ENCODE measurements at regions of chr1 and their contacts with region 1.

Region 1: GRCh38 chr1:21937372-21938221 is 487 bp upstream of the HSPG2 start:
- DNase-seq: peak; percentile 59 to 76
- ATAC-seq: peak; percentile 45 to 61
- H3K4me3 ChIP-seq: peak overlapping the region; percentile 55 to 70 (median 60)
- H3K27ac ChIP-seq: peak overlapping the region; percentile 72 to 83 (median 80)
- H3K4me1 ChIP-seq: peaks cover 48 to 75% of the 10 kb centered on the region in 2 donors
- H3K27me3 ChIP-seq: no peaks in the 10 kb centered on the region
- CTCF ChIP-seq: no peak
- POLR2A ChIP-seq: peak in 1 of 2 donors; percentile 37

Region 2: GRCh38 chr1:20194757-20195461 is 1742.7 kb before region 1 on chr1:
- in situ Hi-C with region 1: no loop called
- intact Hi-C with region 1: no loop called
- DNase-seq: peak; percentile 45 to 54
- ATAC-seq: peak; percentile 68 to 91
- H3K4me3 ChIP-seq: peak overlapping the region in 2 of 4 donors; percentile 14 to 37
- H3K27ac ChIP-seq: peak overlapping the region in 1 of 4 donors; percentile 45
- H3K4me1 ChIP-seq: peaks cover 4 to 22% of the 10 kb centered on the region in 2 donors
- H3K27me3 ChIP-seq: peaks cover 2 to 14% (median 3%) of the 10 kb centered on the region in 3 donors
- CTCF ChIP-seq: peak; percentile 60 to 82 (median 74)
- POLR2A ChIP-seq: no peak

Region 3: DNA sequence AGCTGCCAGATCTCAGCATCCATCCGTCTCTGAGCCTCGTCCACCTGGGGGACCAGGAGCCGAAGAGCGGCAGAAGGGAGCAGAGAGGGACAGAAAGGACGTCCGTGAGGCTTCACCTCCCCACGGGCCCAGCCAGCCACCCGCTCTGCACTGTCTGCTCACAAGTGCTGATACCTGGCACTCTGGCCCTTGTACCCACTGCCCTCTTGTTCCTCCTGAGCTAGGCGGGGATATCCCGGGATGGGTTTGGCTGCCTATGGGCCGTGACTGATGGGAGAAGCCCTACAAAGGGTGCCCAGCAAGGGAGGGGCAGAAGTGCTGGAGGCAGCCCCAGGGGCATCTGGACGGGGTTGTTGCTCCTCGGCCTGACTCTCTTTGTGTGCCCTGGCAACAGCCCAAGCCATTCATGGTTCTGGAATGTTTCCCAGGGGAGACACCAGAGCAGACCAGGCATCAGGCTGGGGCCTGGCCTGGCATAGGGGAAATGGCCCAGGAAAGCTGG is 67.9 kb before region 1 on chr1:
- in situ Hi-C with region 1: no loop called
- intact Hi-C with region 1: loop called (anchors 2 kb)
- DNase-seq: peak; percentile 43 to 79
- ATAC-seq: peak; percentile 67 to 69
- H3K4me3 ChIP-seq: no peak overlapping the region
- H3K27ac ChIP-seq: peak overlapping the region; percentile 10 to 54 (median 28)
- H3K4me1 ChIP-seq: peaks cover 9% of the 10 kb centered on the region in 2 donors
- H3K27me3 ChIP-seq: no peaks in the 10 kb centered on the region
- CTCF ChIP-seq: no peak
- POLR2A ChIP-seq: no peak

Region 4: GRCh38 chr1:21896652-21897532 is 40.7 kb before region 1 on chr1:
- in situ Hi-C with region 1: no loop called
- intact Hi-C with region 1: loop called (anchors 2 kb)
- DNase-seq: peak; percentile 86 to 91
- ATAC-seq: peak; percentile 85 to 86
- H3K4me3 ChIP-seq: peak overlapping the region in 1 of 4 donors; percentile 15
- H3K27ac ChIP-seq: peak overlapping the region; percentile 59 to 91 (median 88)
- H3K4me1 ChIP-seq: peaks cover 70 to 82% of the 10 kb centered on the region in 2 donors
- H3K27me3 ChIP-seq: no peaks in the 10 kb centered on the region
- CTCF ChIP-seq: no peak
- POLR2A ChIP-seq: no peak